ENCODE measurements at regions of chr10 and their contacts with region 1.

Region 1: DNA sequence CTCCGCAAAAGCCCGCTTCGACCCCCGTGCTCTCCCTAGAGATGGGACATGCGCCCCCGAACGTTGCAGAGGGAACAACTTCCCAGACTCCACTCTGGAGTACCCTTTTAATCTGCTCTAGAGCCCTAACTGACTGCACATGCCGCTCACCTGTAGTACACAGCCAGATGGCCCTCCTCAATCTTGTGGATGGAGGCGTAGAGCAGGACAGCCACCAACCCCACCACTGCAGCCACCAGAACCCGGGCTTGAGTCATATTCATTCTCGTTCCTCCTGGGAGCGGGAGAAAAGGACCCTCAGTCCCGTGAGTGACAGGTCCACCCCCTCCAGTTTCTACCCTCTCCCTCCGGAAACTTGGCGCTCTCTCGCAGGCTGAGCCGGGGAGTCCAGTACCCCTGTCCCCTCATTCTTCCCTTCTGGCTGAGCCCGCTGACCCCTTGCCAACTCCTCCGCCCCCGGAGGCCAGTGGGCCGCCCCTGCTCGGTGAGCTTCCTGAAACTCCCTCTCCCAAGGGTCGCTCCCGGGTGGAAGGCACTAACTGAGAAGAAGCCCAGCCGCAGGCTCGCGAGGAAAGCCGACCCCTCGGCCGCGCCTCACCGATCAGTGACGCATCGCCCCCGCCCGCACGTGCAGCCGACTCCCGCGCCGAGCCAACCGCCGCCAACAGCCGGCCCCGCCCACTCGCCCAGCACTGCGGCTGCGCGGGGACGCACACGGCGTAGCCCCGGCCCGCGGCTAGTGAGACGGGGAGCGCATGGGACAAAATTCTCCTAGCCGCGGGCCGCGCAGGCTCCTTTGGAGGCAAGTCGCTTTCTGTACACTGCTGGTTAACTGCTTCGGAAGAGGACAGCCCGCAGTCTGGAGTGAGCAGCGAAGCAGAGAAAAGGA is at the start of gene ERLIN1:
- DNase-seq: peak; percentile 90
- H3K4me3 Mint-ChIP-seq: peak within 1 kb of the TSS; percentile 98
- H3K27ac Mint-ChIP-seq: peak within 1 kb of the TSS; percentile 96
- H3K4me1 Mint-ChIP-seq: peaks cover 59% of the 10 kb centered on the region
- H3K27me3 Mint-ChIP-seq: no peaks in the 10 kb centered on the region
- total RNA-seq, gene ERLIN1: 16.6 and 19.4 TPM in 2 replicates

Region 2: GRCh38 chr10:99430451-99431189 is 755.0 kb before region 1 on chr10 and contains the start of gene GOT1:
- intact Hi-C with region 1: loop called (anchors 1 kb)
- DNase-seq: peak; percentile 93
- H3K4me3 Mint-ChIP-seq: peak within 1 kb of the TSS; percentile 99
- H3K27ac Mint-ChIP-seq: peak within 1 kb of the TSS; percentile 94
- H3K4me1 Mint-ChIP-seq: peaks cover 26% of the 10 kb centered on the region
- H3K27me3 Mint-ChIP-seq: peaks cover 3% of the 10 kb centered on the region
- total RNA-seq, gene GOT1: 35.9 and 36.1 TPM in 2 replicates

Region 3: GRCh38 chr10:99845837-99846382 is 339.7 kb before region 1 on chr10:
- intact Hi-C with region 1: loop called (anchors 1 kb)
- DNase-seq: peak; percentile 59
- H3K4me3 Mint-ChIP-seq: no peak overlapping the region
- H3K27ac Mint-ChIP-seq: no peak overlapping the region
- H3K4me1 Mint-ChIP-seq: peaks cover 11% of the 10 kb centered on the region
- H3K27me3 Mint-ChIP-seq: no peaks in the 10 kb centered on the region

Region 4: DNA sequence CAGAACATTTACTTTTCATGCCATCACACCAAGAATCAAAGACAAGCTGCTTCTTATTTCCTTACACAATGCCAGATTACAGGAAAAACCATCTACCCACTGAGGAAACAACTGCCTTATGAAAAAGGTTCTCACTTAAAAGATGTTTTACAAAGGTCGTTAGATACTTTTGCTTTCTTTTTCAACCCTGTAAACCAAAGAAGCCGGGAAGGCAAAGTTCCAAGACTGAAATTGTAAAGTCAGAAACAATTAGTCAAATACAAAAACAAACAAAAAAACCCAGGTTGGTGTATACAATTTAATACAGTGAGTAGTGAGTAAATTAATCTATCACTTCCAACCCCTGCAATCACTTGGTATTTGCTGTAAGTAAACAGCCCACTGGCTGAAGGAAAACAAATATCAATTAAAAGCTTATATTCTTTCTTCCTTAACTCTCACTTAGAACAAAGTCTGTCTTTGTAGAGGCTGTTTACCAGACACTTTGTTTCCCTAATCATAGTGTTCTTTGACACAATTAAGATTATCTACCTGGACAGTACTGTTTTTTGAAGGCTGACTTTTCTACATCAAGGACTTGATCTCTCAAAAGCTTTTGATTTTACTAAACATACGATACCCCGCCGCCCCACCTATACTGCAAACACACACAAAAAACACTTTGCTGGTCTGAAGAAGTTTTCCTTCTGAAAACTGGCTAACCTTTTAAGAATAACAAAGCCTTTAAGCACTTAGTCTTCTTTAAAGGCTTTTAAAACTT is 17.9 kb before region 1 on chr10:
- intact Hi-C with region 1: loop called (anchors 2 kb)
- DNase-seq: no peak
- H3K4me3 Mint-ChIP-seq: peak overlapping the region; percentile 74
- H3K27ac Mint-ChIP-seq: peak overlapping the region; percentile 77
- H3K4me1 Mint-ChIP-seq: peaks cover 34% of the 10 kb centered on the region
- H3K27me3 Mint-ChIP-seq: no peaks in the 10 kb centered on the region

Region 5: DNA sequence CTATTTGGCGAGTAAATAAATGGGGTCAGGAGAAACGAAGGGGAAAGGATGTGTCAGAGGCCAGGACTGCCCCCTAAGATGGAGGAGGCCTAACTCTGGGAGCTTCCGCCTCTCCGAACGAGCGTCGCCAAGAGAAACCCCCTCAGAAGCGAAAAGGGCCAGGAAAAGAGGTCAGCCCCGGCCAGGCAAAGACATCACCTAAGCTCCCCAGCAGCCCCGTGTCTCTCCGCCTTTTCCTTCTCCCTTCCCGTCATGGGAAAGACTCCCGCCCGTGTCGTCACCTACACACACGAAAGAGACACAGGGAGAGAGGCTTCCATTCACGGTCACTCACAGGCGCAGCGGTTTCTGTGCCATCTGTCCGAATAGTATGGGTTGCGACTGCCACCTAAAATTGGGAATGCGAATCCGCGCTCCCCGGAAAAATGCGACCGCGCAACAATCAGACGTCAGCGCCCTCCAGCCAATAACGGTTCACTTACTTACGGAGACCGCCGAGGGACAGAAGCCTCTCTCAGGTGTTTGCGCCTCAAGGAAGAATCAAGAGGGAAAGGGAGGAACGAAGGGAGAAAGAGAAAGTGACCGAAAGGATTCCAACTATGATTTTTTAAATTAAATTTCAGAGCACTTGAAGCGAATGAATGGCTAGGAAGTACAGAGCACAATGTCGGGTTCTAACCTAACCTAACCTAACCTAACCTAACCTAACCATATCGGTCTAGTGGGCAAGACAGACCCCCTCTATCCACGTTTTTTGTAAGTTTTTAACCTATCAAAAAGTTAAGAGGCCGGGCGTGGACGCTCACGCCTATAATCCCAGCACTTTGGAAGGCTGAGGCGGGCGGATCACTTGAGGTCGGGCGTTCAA is 81.9 kb after region 1 on chr10 and contains the start of gene CWF19L1:
- intact Hi-C with region 1: loop called (anchors 1 kb)
- DNase-seq: peak; percentile 72
- H3K4me3 Mint-ChIP-seq: peak within 1 kb of the TSS; percentile 99
- H3K27ac Mint-ChIP-seq: peak within 1 kb of the TSS; percentile 95
- H3K4me1 Mint-ChIP-seq: peaks cover 20% of the 10 kb centered on the region
- H3K27me3 Mint-ChIP-seq: no peaks in the 10 kb centered on the region
- total RNA-seq, gene CWF19L1: 37.3 and 42.6 TPM in 2 replicates

Region 6: DNA sequence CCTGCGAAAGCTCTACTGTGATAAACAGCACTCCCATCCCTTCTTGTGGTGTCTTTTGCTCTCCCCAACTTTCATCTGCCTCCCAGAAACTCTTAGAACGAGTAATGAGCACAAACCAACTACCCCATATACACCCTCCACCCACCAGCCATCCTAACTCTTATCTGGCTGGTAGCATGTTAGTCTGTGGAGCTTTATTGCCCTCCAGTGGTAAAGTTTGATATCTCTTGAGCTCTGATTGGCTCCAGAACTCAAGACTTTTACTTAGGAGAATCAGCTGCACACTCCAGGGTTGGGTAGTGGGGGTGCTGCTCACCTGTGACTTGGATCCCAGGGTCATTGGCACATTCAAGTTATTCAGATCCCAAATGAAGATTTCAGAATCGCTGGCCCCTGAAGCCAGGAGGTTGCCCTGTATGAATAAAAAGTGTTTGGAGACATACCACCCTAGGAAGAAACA is 323.1 kb after region 1 on chr10:
- intact Hi-C with region 1: loop called (anchors 5 kb)
- DNase-seq: peak; percentile 50
- H3K4me3 Mint-ChIP-seq: peak overlapping the region; percentile 77
- H3K27ac Mint-ChIP-seq: peak overlapping the region; percentile 88
- H3K4me1 Mint-ChIP-seq: peaks cover 92% of the 10 kb centered on the region
- H3K27me3 Mint-ChIP-seq: no peaks in the 10 kb centered on the region

Region 7: DNA sequence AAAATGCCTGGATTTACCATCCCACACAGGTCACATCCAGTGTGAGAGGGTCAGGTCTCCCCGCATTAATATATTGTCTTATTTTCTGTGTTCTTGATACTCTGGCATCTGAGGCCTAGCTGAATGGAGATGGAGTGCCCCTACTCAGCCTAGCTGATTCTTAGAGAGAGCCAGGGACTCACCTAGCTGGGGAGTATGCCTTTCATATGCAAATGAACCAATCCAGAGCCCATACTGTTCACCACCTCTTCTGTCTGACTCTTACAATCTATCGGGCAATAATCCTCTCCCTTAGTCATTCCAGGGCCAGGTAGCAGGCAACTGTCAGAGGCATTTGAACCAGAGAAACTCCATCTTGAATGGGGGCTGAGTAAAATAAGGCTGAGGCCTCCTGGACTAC is 997.3 kb after region 1 on chr10:
- intact Hi-C with region 1: no loop called
- DNase-seq: no peak
- H3K4me3 Mint-ChIP-seq: no peak overlapping the region
- H3K27ac Mint-ChIP-seq: no peak overlapping the region
- H3K4me1 Mint-ChIP-seq: no peaks in the 10 kb centered on the region
- H3K27me3 Mint-ChIP-seq: peaks cover 14% of the 10 kb centered on the region

Measured in activated T-helper 1 cell treated with anti-CD3 and anti-CD28 coated beads, Interleukin-12 subunit alpha, Interleukin-12 subunit beta, Interleukin-2, Interleukin-4 antibody, amounts not matched to agents 30 ng/mL and 10 ng/mL and 1 ng/mL, durations not matched to agents 14 hours and 24 hours and 36 hours (primary cell).